ENCODE measurements at regions of chr19 and their contacts with region 1.

Region 1: DNA sequence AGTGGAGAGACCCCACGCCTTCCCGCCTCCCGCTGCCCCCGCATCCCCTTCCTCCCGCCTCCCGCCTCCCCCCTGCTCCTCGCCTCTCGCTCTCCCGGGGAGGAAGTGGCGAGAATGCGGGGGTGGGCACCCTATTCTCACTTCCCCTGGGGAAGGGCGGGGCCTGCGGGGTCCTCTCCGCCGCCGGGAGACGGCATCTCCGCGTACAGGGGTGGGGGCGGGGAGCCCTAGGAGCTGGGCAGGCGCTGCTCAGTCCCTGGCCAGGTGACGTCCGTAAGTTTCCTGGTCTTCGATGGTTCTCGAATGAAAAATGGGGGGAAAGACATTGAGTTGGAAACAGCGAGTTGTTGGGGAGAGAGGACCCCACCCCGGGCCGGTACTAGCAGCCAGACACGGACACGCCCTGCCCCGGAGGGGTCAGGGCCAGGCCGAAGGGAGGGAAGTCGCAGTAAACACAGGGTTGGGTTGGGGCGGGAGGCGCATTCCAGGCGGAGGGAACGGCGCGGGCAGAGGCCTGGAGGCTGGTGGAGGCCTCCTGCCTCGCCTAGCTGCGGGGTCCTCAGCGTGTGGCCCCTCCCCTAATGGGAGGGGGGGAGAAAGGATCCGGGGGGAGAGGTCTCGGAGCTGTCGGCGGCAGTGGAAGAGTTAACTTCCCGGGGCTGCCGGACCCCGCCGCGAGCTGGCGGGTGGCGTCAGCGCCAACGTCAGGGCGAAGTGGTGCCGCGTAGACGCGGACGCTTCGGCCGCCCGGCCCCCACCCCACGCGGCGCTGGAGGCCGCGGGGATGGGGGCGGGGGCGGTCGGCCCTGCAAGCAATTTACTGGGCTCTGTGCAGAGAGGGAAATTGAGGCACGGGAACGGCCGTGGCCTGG is 10.4 kb upstream of the JUND start:
- H3K4me3 ChIP-seq: peak overlapping the region; percentile 49
- H3K27ac ChIP-seq: peak overlapping the region; percentile 58
- H3K4me1 ChIP-seq: peaks cover 2% of the 10 kb centered on the region; the same call in 1 of the 2 replicates
- CTCF ChIP-seq: no peak

Region 2: DNA sequence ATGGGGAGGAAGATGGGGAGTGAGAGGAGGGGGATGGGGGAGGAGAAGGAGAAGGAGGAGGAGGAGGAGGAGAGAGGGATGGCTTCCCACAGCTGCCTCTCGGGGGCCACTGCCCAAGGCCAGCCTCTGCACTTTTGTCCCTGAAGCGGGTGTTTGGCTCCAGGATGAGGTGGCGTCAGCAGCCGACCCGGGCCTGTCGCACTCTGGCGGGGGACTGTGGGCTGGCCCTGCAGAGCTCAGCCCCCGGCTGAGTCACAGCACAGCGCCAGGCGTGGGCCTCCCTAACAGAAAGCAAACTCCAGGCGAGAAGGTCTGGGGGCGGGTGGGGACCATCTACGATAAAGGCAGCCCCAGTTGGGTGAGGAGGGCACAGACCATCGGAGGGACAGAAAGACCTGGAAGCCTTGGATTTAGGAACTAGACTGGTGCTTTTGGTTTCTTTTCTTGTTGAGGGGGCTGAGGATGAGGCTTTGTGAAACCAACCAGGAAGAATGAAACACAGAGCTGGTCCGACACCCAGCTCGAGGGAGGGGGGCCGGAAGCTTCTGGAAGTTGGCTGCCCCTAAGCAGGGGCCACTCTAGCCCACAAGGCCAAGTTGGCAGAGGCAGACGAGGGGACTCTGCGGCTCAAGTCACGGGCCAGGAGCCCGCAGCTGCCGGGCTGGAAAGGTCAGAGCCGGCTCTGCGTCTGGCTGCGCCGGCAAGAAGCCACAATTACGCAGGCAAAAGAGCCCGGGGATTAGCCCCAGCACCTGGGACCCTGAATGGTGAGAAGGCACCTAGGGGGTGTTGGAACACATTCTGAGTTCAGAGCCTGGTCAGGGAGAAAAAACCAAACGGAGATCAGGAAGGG is 12.9 kb after region 1 on chr19:
- CTCF ChIA-PET with region 1: interaction called, 6 read pairs
- POLR2A ChIA-PET with region 1: interaction called, 12 read pairs
- H3K4me3 ChIP-seq: no peak overlapping the region
- H3K27ac ChIP-seq: no peak overlapping the region; the same call in 1 of the 2 replicates
- H3K4me1 ChIP-seq: peaks cover 5% of the 10 kb centered on the region; the same call in 1 of the 2 replicates
- CTCF ChIP-seq: peak; percentile 46; the same call in 1 of the 2 replicates

Region 3: DNA sequence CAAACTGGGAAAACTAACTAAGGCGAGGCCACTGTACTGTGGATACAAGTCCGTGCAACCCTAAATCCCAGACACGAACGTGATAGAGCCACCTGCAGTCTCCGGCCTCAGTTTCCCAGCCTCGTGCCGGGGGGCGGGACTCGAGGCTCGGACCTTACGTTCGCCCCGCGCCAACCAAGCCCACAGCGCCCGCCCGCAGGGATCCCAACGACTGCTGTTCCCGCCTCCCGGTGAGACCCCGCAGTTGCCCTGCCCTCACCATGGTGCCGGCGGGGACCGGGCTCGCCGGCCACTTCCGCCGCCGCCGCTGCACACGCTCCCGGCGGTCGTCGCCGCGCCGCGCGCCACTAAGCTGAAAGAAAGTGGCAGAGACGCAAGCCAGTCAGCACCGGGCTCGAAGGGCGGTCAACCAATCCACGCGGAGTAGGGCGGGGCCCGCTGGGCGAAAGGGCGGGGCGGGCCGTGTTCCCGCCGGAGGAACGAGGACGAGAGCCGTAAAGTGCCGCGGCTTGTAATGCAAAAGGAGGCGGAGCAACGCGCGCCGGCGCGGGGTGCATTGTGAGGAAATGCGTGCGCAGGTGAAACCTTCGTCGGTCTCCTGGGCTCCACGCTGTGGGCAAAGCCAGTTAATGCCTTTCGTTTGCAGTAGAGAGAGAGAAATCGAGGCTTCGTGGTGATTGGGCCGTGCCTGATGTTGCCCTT is 31.1 kb after region 1 on chr19 and contains the start of gene LSM4:
- CTCF ChIA-PET with region 1: interaction called, 6 read pairs
- POLR2A ChIA-PET with region 1: interaction called, 22 read pairs
- H3K4me3 ChIP-seq: peak within 1 kb of the TSS; percentile 92
- H3K27ac ChIP-seq: peak within 1 kb of the TSS; percentile 84
- H3K4me1 ChIP-seq: peaks cover 7% of the 10 kb centered on the region
- CTCF ChIP-seq: no peak

Measured in HEK293 (cell line).